ENCODE measurements at regions of chr12 and their contacts with region 1.

Region 1: GRCh38 chr12:122752464-122753318 is at the start of gene DENR:
- DNase-seq: peak; percentile 98
- ATAC-seq: peak; percentile 99
- H3K4me3 ChIP-seq: peak within 1 kb of the TSS; percentile 71
- H3K27ac ChIP-seq: peak within 1 kb of the TSS; percentile 87
- H3K4me1 ChIP-seq: peaks cover 19% of the 10 kb centered on the region
- H3K27me3 ChIP-seq: no peaks in the 10 kb centered on the region
- CTCF ChIP-seq: peak; percentile 87
- total RNA-seq, gene DENR: 30.9 TPM

Region 2: DNA sequence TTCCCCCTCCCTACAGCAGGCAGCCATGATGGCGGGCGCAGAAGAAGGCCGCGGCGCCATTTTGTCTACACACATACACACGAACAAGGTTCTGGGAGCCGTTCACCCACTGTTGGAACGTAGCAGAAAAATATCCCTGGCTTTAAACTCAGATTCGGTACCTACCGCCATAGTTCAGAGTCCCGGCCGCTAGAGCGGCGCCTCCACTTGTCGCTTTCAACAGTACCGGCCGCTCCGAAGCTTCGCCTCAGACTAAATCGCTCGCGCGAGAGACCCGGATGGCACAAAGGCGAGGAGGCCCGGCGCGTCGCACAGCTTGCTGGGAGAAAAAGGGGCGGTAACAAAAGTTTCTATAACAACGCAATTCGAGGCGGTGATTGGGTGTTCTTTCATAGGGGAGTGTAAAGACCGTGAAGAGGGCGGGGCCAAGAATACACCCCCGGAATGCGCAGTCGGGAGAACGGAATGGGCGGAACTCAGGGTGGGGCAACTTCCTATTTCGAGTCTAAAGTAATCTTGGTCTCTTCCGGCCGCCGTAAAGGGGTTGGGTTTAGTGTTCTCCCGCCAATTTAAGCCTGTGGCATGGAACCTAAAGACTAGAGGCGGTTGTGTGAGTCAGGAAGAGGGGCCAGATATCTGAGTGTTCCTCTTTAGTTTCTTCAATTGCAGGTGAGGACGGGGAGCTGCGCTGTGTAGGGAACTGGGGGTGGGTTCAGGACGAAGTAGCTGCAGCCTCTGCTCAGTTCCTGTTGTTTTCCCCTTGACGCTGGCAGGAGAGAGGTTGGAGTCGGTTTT is 225.8 kb before region 1 on chr12 and contains the starts of genes KNTC1 and RSRC2:
- intact Hi-C with region 1: no loop called
- DNase-seq: peak; percentile 97
- ATAC-seq: peak; percentile 97 to 99
- H3K4me3 ChIP-seq: peak within 1 kb of the TSS; percentile 72
- H3K27ac ChIP-seq: peak within 1 kb of the TSS; percentile 97
- H3K4me1 ChIP-seq: peaks cover 43% of the 10 kb centered on the region
- H3K27me3 ChIP-seq: no peaks in the 10 kb centered on the region
- CTCF ChIP-seq: no peak
- total RNA-seq, gene KNTC1: 8.7 TPM
- total RNA-seq, gene RSRC2: 59.1 TPM

Region 3: GRCh38 chr12:122635471-122635870 is 117.2 kb before region 1 on chr12:
- intact Hi-C with region 1: loop called (anchors 10 kb)
- DNase-seq: no peak
- ATAC-seq: no peak
- H3K4me3 ChIP-seq: no peak overlapping the region
- H3K27ac ChIP-seq: no peak overlapping the region
- H3K4me1 ChIP-seq: no peaks in the 10 kb centered on the region
- H3K27me3 ChIP-seq: no peaks in the 10 kb centered on the region
- CTCF ChIP-seq: no peak